CD4-positive, alpha-beta memory T cell (primary cell): ENCODE measurements at regions of chr2 and their contacts with region 1.

Region 1: GRCh38 chr2:47767880-47768609 is 14.9 kb upstream of the MSH6 start:
- DNase-seq: peak; percentile 41 to 70 (median 56)
- H3K4me3 ChIP-seq: no peak overlapping the region
- H3K4me3 Mint-ChIP-seq: peak overlapping the region; percentile 41 to 78 (median 66)
- H3K27ac ChIP-seq: no peak overlapping the region
- H3K27ac Mint-ChIP-seq: no peak overlapping the region
- H3K4me1 ChIP-seq: peaks cover 8% of the 10 kb centered on the region
- H3K4me1 Mint-ChIP-seq: peaks cover 2 to 10% (median 4%) of the 10 kb centered on the region in 4 donors
- H3K27me3 ChIP-seq: no peaks in the 10 kb centered on the region
- H3K27me3 Mint-ChIP-seq: peaks cover 2 to 3% of the 10 kb centered on the region in 2 donors

Region 2: GRCh38 chr2:47336259-47337238 is 431.5 kb before region 1 on chr2:
- CTCF ChIA-PET with region 1: interaction called, 78 read pairs
- POLR2A ChIA-PET with region 1: no interaction called
- intact Hi-C with region 1: no loop called
- DNase-seq: no peak
- H3K4me3 ChIP-seq: no peak overlapping the region
- H3K4me3 Mint-ChIP-seq: no peak overlapping the region
- H3K27ac ChIP-seq: no peak overlapping the region
- H3K27ac Mint-ChIP-seq: no peak overlapping the region
- H3K4me1 ChIP-seq: no peaks in the 10 kb centered on the region
- H3K4me1 Mint-ChIP-seq: peaks cover 0 to 5% (median 2%) of the 10 kb centered on the region in 4 donors
- H3K27me3 ChIP-seq: no peaks in the 10 kb centered on the region
- H3K27me3 Mint-ChIP-seq: peaks cover 0 to 5% of the 10 kb centered on the region in 2 donors

Region 3: DNA sequence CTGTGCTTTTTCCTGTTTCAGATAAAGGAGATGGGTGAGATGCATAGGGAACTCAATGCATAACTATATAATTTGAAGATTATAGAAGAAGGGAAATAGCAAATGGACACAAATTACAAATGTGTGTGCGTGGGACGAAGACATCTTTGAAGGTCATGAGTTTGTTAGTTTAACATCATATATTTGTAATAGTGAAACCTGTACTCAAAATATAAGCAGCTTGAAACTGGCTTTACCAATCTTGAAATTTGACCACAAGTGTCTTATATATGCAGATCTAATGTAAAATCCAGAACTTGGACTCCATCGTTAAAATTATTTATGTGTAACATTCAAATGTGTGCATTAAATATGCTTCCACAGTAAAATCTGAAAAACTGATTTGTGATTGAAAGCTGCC is 381.5 kb before region 1 on chr2:
- CTCF ChIA-PET with region 1: interaction called, 6 read pairs
- POLR2A ChIA-PET with region 1: interaction called, 3 read pairs
- intact Hi-C with region 1: loop called (anchors 5 kb)
- DNase-seq: no peak
- H3K4me3 ChIP-seq: no peak overlapping the region
- H3K4me3 Mint-ChIP-seq: no peak overlapping the region
- H3K27ac ChIP-seq: no peak overlapping the region
- H3K27ac Mint-ChIP-seq: no peak overlapping the region
- H3K4me1 ChIP-seq: no peaks in the 10 kb centered on the region
- H3K4me1 Mint-ChIP-seq: no peaks in the 10 kb centered on the region
- H3K27me3 ChIP-seq: no peaks in the 10 kb centered on the region
- H3K27me3 Mint-ChIP-seq: peaks cover 10% of the 10 kb centered on the region in 2 donors

Region 4: GRCh38 chr2:47437287-47437686 is 330.8 kb before region 1 on chr2:
- CTCF ChIA-PET with region 1: interaction called, 9 read pairs
- POLR2A ChIA-PET with region 1: no interaction called
- intact Hi-C with region 1: loop called (anchors 2 kb)
- DNase-seq: peak in 1 of 5 donors; percentile 3
- H3K4me3 ChIP-seq: no peak overlapping the region
- H3K4me3 Mint-ChIP-seq: no peak overlapping the region
- H3K27ac ChIP-seq: no peak overlapping the region
- H3K27ac Mint-ChIP-seq: no peak overlapping the region
- H3K4me1 ChIP-seq: no peaks in the 10 kb centered on the region
- H3K4me1 Mint-ChIP-seq: peaks cover 0 to 2% (median 2%) of the 10 kb centered on the region in 4 donors
- H3K27me3 ChIP-seq: no peaks in the 10 kb centered on the region
- H3K27me3 Mint-ChIP-seq: no peaks in the 10 kb centered on the region

Region 5: GRCh38 chr2:47520825-47521665 is 247.0 kb before region 1 on chr2:
- CTCF ChIA-PET with region 1: interaction called, 4 read pairs
- POLR2A ChIA-PET with region 1: no interaction called
- intact Hi-C with region 1: loop called (anchors 1 kb)
- DNase-seq: peak; percentile 72 to 80 (median 78)
- H3K4me3 ChIP-seq: peak overlapping the region; percentile 23 to 81
- H3K4me3 Mint-ChIP-seq: peak overlapping the region; percentile 92 to 96 (median 94)
- H3K27ac ChIP-seq: peak overlapping the region; percentile 23
- H3K27ac Mint-ChIP-seq: peak overlapping the region; percentile 59 to 97 (median 93)
- H3K4me1 ChIP-seq: peaks cover 18% of the 10 kb centered on the region
- H3K4me1 Mint-ChIP-seq: peaks cover 10 to 31% (median 18%) of the 10 kb centered on the region in 4 donors
- H3K27me3 ChIP-seq: no peaks in the 10 kb centered on the region
- H3K27me3 Mint-ChIP-seq: peaks cover 0 to 1% of the 10 kb centered on the region in 2 donors

Region 6: GRCh38 chr2:47782671-47783485 is 14.8 kb after region 1 on chr2 and contains the start of gene MSH6:
- CTCF ChIA-PET with region 1: interaction called, 32 read pairs
- POLR2A ChIA-PET with region 1: interaction called, 6 read pairs
- intact Hi-C with region 1: no loop called
- DNase-seq: peak; percentile 87 to 93 (median 92)
- H3K4me3 ChIP-seq: peak within 1 kb of the TSS; percentile 78 to 99
- H3K4me3 Mint-ChIP-seq: peak within 1 kb of the TSS; percentile 90 to 94 (median 92)
- H3K27ac ChIP-seq: peak within 1 kb of the TSS; percentile 94
- H3K27ac Mint-ChIP-seq: peak within 1 kb of the TSS; percentile 84 to 94 (median 92)
- H3K4me1 ChIP-seq: peaks cover 36% of the 10 kb centered on the region
- H3K4me1 Mint-ChIP-seq: peaks cover 13 to 33% (median 23%) of the 10 kb centered on the region in 4 donors
- H3K27me3 ChIP-seq: no peaks in the 10 kb centered on the region
- H3K27me3 Mint-ChIP-seq: no peaks in the 10 kb centered on the region
- total RNA-seq, gene MSH6: 39.4 to 49.9 TPM

Region 7: DNA sequence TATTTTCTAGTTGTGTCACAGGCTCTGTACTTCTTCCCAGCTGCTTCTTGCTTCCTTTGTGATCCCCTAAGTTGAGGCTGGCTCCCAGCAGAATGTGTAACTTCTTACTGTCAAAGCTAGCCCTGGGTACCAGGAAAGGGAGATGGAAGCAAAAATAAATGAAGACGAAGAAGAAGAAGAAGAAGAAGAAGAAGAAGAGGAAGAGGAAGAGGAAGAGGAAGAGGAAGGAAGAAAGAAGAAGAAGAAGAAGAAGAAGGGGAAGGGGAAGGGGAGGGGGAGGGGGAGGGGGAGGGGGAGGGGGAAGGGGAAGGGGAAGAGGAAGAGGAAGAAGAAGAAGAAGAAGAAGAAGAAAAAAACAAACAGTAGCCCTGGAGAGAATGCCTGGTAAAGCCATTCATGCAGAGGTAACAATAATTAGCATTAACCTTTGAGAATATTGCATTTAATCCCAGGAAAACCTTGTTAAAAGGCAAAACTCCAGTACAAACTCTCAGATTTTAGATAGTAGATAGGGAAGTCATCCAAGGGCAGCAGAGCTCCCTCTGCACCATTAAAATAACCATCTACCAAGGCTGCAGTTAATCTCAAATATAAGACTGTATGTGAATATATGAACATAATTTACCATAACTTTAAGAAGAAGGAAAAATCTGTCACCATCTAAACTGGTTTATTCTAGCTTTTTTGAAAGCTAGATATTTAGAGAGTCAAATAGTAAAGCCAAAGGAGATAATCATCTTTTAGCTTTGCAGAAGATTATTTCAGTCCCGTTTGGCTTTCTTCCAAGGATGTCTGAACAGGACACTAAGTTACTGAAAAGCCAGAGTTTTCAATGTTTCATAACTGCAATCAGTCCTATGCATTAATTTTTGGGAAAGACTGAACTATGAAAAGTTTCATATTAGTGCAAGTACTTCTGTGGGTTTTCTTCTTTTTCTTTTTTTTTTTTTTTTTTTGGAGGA is 182.6 kb after region 1 on chr2:
- CTCF ChIA-PET with region 1: no interaction called
- POLR2A ChIA-PET with region 1: no interaction called
- intact Hi-C with region 1: no loop called
- DNase-seq: no peak
- H3K4me3 ChIP-seq: no peak overlapping the region
- H3K4me3 Mint-ChIP-seq: no peak overlapping the region
- H3K27ac ChIP-seq: no peak overlapping the region
- H3K27ac Mint-ChIP-seq: peak overlapping the region in 1 of 7 donors; percentile 11
- H3K4me1 ChIP-seq: no peaks in the 10 kb centered on the region
- H3K4me1 Mint-ChIP-seq: no peaks in the 10 kb centered on the region
- H3K27me3 ChIP-seq: peaks cover 3% of the 10 kb centered on the region
- H3K27me3 Mint-ChIP-seq: peaks cover 4 to 13% of the 10 kb centered on the region in 2 donors